Activated CD4-positive, alpha-beta T cell treated with anti-CD3 and anti-CD28 coated beads for 36 hours (primary cell): ENCODE measurements at regions of chr1 and their contacts with region 1.

Region 1: DNA sequence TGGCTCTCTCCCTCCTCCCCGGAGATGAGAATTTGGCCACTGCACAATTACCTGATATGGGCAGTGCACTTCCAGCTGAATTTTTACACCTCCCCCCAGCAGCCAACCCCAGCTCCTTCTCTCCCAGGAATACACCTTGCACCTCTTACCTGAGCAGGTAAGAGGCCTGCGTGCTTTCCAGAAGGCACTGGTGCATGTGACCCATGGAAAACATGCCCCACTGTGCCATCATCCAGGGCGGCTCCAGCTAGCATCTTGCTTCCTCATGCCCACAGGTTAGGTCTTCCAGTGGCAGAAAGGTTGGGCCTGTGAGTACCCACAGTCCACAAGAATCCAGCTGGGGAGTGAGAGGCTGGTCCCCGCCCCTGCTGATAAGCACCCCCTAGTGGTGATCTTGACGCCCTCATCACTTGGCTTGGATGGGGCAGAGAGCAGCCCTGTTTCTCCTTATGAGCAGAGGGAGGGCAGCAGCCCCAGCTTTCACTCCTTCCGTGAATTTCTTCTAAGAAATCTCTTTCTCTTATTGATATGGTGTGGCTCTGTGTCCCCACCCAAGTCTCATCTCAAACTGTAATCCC is 57.8 kb downstream of the EDARADD start:
- DNase-seq: peak; percentile 64
- ATAC-seq: peak; percentile 60
- H3K4me3 Mint-ChIP-seq: no peak overlapping the region
- H3K27ac Mint-ChIP-seq: no peak overlapping the region
- H3K4me1 Mint-ChIP-seq: no peaks in the 10 kb centered on the region
- H3K27me3 Mint-ChIP-seq: no peaks in the 10 kb centered on the region

Region 2: DNA sequence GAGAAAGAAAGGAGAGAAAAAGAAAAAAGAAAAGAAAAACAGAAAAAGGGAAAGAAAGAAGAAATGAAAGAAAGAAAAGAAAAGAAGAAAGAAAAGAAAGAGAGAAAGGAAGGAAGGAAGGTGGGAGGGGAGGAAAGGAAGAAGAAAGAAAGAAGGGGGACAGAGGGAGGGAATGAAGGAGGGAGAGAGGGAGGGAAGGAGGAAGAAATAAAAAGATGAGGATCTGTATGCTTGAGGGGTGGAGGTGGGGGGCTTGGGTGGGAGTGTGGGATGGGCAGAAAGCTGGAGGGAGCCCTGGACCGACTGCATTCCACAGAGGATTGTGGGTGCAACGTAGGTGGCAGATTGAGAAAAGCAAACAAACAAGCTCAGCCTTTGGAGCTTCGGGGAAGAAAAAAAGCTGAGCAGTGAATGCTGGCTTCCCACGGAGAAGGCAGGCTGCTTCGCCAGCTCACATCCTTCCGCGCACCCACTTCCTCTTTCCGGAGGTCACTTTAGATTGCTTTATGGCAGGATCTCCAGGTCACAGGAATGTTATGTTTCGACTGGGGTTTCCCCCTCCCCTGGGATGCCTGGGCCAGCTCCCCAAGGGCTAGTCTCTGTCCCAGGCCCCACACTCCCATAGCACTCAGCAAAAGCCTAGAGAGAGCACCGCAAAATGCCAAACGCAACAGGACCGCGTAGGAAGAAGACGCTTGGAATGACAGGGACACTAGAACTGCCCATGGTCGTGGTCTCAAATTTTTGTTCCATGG is 51.2 kb after region 1 on chr1:
- CTCF ChIA-PET with region 1: no interaction called
- POLR2A ChIA-PET with region 1: no interaction called
- intact Hi-C with region 1: loop called in 1 of 2 experiments (anchors 5 kb)
- DNase-seq: peak; percentile 36
- ATAC-seq: no peak
- H3K4me3 Mint-ChIP-seq: peak overlapping the region; percentile 43
- H3K27ac Mint-ChIP-seq: peak overlapping the region; percentile 74
- H3K4me1 Mint-ChIP-seq: peaks cover 14% of the 10 kb centered on the region
- H3K27me3 Mint-ChIP-seq: no peaks in the 10 kb centered on the region

Region 3: GRCh38 chr1:237471956-237472355 is 1020.1 kb after region 1 on chr1:
- CTCF ChIA-PET with region 1: no interaction called
- POLR2A ChIA-PET with region 1: no interaction called
- intact Hi-C with region 1: no loop called
- DNase-seq: no peak
- ATAC-seq: no peak
- H3K4me3 Mint-ChIP-seq: no peak overlapping the region
- H3K27ac Mint-ChIP-seq: no peak overlapping the region
- H3K4me1 Mint-ChIP-seq: no peaks in the 10 kb centered on the region
- H3K27me3 Mint-ChIP-seq: peaks cover 3% of the 10 kb centered on the region